Activated CD4-positive, alpha-beta memory T cell treated with anti-CD3 and anti-CD28 coated beads, Interleukin-2, amount 10 ng/mL, durations not matched to agents 7 days and 5 days (primary cell): ENCODE measurements at regions of chr7 and their contacts with region 1.

Region 1: DNA sequence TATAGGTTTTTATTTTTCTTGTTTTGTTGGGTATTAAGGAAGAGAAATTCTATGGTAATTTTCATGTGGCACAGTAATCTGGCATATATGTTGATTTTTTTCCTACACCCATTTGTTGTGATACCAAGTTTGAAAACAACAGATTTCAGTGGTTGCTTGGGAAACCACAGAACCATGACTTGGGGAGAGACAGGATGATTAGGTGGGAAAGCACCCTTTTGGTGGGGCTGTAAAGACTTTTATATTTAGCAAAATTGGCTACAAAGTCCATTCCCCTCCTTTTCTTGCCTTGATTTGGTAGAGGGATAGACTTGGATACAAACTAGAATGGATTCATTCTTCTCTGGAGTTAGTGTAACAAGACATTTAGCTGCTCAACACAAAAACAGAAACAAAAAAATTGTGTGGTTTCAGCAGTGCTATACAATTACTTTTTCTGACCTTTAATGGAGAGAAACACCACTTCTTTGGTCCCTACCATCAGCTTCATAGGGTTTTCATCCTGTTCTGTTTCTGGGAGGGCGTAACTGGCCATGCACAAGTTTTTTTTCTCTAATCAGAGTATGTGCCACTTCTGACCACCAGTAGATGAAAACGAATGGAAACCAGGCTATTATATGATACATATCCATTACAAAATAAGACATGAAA is 52.7 kb downstream of the FIGNL1 start:
- DNase-seq: peak; percentile 47
- H3K4me3 Mint-ChIP-seq: peak overlapping the region; percentile 10
- H3K27ac Mint-ChIP-seq: peak overlapping the region; percentile 90
- H3K4me1 Mint-ChIP-seq: peaks cover 78% of the 10 kb centered on the region
- H3K27me3 Mint-ChIP-seq: no peaks in the 10 kb centered on the region

Region 2: DNA sequence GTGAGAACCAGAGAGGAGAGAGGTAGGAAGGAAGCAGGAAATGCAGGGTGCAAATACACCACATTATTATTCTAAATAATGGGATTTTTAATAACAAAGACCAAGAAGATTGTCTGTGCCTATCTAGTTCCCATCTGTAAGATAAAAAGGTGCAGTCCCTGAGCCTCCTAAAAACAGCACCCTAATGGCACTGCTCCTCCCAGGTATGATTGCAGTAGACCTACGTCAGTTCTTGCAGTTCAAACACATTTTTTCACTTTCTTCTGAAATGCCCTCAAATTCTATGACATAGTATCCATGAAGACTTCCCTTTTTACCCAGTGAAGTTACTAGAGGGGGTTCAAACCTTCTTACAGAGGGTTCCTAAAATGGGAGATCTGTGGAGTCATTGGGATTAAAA is 17.9 kb before region 1 on chr7:
- CTCF ChIA-PET with region 1: no interaction called
- POLR2A ChIA-PET with region 1: interaction called, 22 read pairs
- DNase-seq: no peak
- H3K4me3 Mint-ChIP-seq: no peak overlapping the region
- H3K27ac Mint-ChIP-seq: no peak overlapping the region
- H3K4me1 Mint-ChIP-seq: peaks cover 67% of the 10 kb centered on the region
- H3K27me3 Mint-ChIP-seq: no peaks in the 10 kb centered on the region